ENCODE measurements at regions of chr1 and their contacts with region 1.

Region 1: GRCh38 chr1:109773146-109773899 is 9.6 kb upstream of the EPS8L3 start:
- DNase-seq: peak; percentile 87
- CTCF ChIP-seq: peak; percentile 91

Region 2: GRCh38 chr1:109649491-109649914 is 123.8 kb before region 1 on chr1:
- CTCF ChIA-PET with region 1: interaction called, 370 read pairs
- POLR2A ChIA-PET with region 1: no interaction called
- DNase-seq: no peak
- CTCF ChIP-seq: peak; percentile 16

Region 3: DNA sequence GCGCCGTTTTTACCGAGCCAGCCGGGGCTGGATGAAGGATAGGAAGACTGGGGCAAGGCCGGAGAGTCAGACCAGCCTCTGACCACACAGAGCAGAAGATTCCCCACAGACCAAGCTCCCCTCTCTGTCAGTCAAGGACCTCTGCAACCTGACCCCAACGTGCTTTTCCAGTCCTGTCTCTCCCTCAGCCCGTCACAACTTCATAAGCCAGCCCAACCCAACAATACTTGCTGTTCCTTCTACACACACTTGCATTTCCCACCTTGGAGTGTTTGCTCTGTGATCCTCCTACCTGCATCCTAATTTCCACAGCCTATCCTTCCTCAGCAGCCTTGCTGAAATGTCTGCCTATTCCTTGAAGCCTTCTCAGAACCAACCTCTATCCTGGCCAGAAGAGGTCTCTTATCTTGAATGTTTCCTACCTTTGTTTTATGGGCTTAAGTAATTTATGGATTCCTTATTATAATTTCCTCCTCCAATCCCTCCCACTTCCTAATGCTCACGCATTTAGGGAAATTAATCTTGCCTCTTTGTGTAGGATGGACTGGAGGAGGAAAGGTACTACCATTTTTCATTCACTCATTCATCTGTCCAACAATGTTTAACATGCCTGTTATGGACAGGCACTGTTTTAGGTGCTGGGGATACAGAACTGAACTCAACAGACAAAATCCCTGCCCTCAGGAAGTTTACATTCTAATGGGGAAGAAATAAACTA is 32.5 kb before region 1 on chr1 and contains the start of gene GSTM3:
- CTCF ChIA-PET with region 1: no interaction called
- POLR2A ChIA-PET with region 1: no interaction called
- DNase-seq: no peak
- CTCF ChIP-seq: no peak

Region 4: DNA sequence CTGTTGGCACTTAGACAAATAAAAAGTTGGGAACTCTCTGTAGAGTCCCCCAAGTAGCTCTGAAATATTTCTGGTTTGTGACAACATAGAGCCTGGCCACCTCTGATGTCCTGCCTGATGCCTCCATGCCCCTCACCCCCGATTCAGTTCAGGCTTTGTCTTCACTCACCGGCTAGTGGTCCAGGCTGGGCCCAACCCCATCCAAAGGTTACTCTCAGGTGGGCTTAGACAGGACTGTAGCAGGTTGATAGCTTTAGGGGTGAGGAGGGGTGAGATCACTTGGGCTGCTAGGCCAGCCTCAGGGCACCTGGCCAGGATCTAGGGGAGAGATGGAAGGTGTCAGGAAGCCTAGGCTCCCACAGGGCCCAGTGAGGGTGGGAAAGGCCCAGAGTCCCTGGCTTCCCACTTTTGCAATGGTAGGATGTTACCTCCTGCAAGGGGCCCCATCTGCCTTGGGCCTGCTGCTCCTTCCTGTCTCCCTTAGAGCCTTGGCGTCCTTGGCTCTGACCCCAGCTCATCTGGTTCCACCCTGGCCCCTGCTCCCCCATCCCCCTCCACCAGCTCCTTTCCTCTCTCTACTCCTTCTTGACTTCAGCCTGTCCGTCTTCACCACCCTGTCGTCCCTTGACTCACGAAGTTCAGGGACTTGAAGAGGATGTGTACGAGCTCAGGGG is 16.3 kb before region 1 on chr1:
- CTCF ChIA-PET with region 1: interaction called, 19 read pairs
- POLR2A ChIA-PET with region 1: no interaction called
- DNase-seq: no peak
- CTCF ChIP-seq: no peak

Region 5: DNA sequence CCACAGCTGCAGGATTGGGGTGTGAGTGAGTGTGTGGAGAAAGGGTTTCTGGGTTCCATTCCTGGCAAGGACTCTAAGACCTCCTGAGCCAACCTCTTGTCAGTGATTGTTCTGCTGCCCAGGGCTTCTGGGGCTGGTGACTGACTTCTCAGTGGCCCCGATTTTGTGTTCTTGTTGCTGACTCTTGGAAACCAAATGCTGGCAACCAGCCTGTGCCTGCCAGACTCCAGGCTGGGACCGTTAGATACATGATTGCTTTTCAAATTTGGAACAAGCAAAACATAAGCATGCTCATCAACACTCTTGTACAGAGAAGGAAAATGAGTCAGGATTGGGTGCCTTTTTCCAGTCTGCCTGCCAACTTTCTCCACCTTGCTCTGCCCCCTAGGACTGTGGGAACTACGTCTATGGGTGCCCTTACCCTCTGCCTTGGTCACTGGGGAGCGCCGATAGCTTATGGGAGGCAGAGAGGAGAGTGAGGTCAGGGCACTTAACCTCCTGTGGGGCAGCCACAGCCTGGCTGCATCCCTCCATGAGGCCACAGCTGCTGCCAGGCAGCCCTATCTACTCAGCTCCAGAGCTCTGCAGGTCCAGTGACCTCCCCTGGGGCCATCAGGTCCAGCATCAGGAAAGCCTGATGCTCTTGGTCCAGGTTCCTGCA is 29.7 kb after region 1 on chr1:
- CTCF ChIA-PET with region 1: interaction called, 24 read pairs
- POLR2A ChIA-PET with region 1: no interaction called
- DNase-seq: no peak
- CTCF ChIP-seq: no peak

Region 6: DNA sequence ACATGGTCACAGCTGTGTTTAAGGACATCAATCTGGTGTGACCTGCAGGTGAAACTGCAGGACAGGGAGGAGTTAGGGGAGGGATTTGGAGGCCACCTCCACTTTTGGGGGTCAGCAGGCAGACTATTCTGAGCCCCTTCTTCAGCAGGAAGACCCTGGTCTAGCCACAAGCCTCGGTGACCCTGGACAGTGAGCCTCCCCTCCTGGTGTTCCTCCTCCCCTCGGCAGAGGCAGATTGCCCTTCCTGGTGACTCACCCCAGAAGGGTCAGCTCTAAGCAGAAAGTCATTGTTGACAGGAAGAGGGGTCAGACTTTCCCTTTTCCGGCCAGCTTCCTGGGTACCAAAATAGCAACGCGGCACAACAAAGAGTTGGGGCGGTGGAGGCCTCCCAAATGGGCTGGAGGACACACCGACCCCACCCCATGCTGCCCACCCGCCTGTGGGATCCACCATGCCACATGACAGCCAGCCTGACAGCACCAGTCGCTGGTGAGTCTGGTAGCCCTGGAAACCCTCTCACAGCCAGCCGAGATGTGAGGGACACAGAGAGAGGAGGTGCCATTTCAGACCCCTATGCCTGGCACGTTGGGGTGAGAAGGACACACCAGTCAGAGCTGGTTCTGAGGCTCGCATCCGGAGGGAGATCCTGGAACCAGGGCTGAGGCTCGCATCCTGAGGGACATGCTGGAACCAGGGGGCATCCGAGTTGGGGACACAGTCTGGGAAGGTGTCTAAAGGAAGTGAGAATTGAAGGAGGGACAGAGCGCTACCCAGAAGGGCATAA is 122.6 kb after region 1 on chr1:
- CTCF ChIA-PET with region 1: interaction called, 10 read pairs
- POLR2A ChIA-PET with region 1: no interaction called
- DNase-seq: no peak
- CTCF ChIP-seq: no peak

Region 7: GRCh38 chr1:110005971-110006370 is 232.6 kb after region 1 on chr1:
- CTCF ChIA-PET with region 1: interaction called, 78 read pairs
- POLR2A ChIA-PET with region 1: no interaction called
- DNase-seq: no peak
- CTCF ChIP-seq: no peak

Region 8: DNA sequence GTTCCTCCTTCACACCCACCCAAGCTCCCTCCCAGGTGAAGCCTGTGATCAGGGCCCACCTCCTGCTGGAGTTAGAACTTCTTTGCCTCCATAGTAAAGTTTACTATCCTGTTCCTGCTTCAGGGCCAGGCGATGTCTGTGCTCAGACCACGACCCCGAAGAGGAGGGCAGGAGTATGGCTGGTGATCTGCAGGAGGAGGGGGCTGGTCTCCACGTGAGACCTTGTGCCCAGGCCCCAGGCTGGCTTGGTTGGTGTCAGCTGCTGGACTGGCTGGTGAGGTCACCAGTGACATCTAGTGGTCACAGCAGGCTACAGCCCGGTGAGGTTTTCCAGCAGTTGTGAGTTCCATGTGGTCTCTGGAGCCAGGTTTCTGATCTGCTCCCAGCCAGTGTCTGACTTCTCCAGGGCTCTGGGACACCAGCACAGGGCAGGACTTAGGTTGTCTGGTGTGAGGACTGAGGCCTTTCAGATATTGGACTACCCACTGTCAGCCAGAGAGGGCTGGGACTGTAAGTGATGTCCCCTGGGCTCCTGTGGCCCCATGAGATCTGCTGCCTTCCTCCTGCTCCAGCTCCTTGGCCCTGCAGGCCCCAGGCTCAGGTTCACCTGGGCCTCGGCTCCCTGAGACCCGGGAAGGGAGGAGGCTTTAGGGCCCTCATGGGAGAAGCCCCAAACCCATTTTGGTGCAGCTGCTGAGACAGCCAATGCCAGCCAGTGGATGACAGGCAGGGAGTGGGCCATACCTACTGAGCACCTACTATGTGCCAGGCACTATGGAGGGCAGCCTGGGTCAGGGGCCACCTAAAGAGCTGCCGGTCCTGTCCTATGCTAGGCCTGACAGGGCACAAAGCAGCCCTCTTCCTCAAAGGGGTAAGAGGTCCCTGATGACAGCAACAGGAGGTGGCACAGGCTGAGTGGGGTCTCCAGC is 333.0 kb after region 1 on chr1:
- CTCF ChIA-PET with region 1: interaction called, 11 read pairs
- POLR2A ChIA-PET with region 1: no interaction called
- DNase-seq: peak; percentile 85
- CTCF ChIP-seq: peak; percentile 96

Measured in GM10248 (cell line).